BJ (cell line): ENCODE measurements at regions of chr15 and their contacts with region 1.

Region 1: DNA sequence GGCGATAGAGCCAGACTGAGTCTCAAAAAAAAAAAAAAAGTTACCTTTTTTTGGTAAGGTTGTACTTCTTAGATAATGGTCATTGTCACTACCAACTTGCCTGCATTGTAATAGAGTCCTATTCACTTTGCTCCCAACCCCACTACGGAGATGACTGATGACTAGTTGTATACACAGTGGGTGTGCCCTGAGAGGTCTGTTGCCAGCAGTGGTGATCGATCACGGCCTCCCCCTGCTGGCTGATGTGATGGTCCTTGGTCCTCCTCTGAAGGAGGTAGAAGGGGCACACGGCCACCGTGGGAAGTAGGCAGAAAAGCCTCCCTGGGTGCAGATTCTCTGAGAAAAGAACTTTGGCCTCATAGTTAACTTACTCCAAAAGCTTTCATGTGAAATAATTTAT is 10.7 kb downstream of the GCNT3 start:
- DNase-seq: no peak
- H3K4me3 ChIP-seq: no peak overlapping the region
- H3K27me3 ChIP-seq: peaks cover 4% of the 10 kb centered on the region
- CTCF ChIP-seq: peak; percentile 44

Region 2: DNA sequence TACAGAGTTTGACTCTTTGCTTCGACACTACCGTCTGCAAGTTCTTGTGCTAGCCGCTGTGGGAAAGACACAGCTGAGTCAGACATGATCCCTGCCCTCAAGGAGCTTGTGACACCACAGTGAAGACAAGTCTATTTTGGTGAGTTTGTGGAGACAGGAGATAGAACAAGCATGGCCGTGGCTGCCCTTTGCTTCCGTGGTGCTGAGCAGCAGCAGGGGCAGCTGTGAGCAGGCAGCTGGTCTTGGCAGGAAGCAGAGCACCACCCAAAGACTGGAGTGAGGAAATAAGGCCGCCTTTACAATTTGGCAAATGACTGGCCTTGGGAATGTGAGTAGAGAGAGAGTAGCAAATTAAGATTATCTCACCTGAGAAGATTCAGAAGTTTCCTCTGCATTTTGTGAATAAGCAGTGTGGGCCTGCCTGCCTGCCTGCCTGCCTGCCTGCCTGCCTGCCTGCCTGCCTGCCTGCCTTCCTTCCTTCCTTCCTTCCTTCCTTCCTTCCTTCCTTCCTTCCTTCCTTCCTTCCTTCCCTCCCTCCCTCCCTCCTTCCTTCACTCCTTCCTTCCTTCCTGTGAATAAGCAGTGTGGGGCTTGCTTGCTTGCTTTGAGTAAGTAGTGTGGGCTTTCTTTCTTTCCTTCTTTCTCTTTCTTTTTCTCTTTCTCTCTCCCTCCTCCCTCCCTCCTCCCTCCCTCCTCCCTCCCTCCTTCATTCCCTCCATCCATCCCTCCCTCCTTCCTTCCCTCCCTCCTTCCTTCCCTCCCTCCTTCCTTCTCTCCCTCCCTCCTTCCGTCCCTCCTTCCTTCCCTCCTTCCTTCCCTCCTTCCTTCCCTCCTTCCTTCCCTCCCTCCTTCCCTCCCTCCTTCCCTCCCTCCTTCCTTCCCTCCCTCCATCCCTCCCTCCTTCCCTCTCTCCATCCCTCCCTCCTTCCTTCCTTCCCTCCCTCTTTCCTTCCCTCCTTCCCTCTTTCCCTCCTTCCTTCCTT is 12.3 kb before region 1 on chr15:
- CTCF ChIA-PET with region 1: interaction called, 3 read pairs
- POLR2A ChIA-PET with region 1: interaction called, 35 read pairs
- DNase-seq: no peak
- H3K4me3 ChIP-seq: no peak overlapping the region
- H3K27me3 ChIP-seq: peaks cover 3% of the 10 kb centered on the region; the same call in 1 of the 2 replicates
- CTCF ChIP-seq: no peak

Region 3: GRCh38 chr15:60035344-60035743 is 413.1 kb after region 1 on chr15:
- CTCF ChIA-PET with region 1: no interaction called
- POLR2A ChIA-PET with region 1: no interaction called
- DNase-seq: no peak
- H3K4me3 ChIP-seq: no peak overlapping the region
- H3K27me3 ChIP-seq: 0 out of 2 replicates have a peak, but pooled peaks cover 2% of the 10 kb centered on the region
- CTCF ChIP-seq: no peak